ENCODE measurements at regions of chr7 and their contacts with region 1.

Region 1: GRCh38 chr7:77759294-77759889 is 38.8 kb downstream of the TMEM60 start:
- DNase-seq: peak; percentile 27 to 44
- ATAC-seq: peak; percentile 69 to 78
- H3K4me3 ChIP-seq: no peak overlapping the region
- H3K27ac ChIP-seq: peak overlapping the region; percentile 24 to 57 (median 48)
- H3K4me1 ChIP-seq: peaks cover 25 to 39% of the 10 kb centered on the region in 2 donors
- H3K27me3 ChIP-seq: no peaks in the 10 kb centered on the region
- CTCF ChIP-seq: peak; percentile 80 to 91 (median 81)
- POLR2A ChIP-seq: no peak

Region 2: GRCh38 chr7:77439572-77439971 is 319.8 kb before region 1 on chr7:
- in situ Hi-C with region 1: loop called in 2 of 4 experiments (anchors 10 kb)
- intact Hi-C with region 1: loop called (anchors 10 kb)
- DNase-seq: peak; percentile 25 to 30
- ATAC-seq: peak; percentile 68 to 73
- H3K4me3 ChIP-seq: no peak overlapping the region
- H3K27ac ChIP-seq: no peak overlapping the region
- H3K4me1 ChIP-seq: no peaks in the 10 kb centered on the region
- H3K27me3 ChIP-seq: no peaks in the 10 kb centered on the region
- CTCF ChIP-seq: peak in 3 of 5 experiments; percentile 22 to 50 (median 34)
- POLR2A ChIP-seq: no peak

Region 3: DNA sequence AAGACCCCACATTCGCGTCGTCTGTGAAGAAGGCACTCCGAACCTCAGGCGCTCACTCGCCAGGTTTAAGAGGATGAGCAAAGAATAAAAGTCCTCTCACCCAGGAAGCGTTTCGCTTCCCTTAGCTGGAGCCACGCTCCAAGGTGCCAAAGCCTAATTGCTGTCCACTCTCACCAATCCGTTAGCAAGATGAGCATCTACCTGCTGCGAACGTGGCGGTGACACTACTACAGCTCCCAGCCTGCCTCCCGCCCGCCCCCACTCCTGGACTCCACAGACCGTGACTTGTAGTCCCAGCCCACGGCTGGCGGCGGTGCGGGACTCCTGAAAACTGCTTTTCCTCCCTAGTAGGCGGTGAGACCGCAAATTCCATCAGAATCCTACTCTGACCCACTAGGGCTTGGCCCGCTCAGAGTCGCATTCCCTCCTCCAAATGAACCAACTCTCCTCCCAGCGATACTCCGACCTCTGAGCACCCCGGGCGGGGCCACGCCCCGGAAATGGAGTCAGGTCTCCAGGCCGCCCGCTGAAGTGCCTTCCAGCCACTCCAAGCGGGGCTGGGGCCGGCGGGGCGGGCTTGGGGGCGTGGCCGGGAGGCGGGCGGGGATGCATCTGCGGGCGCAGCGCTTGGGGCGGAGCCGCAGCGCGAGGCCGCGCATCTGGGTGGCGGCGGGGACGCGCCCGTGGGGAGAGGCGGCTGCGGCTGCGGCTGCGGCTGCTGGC is 222.8 kb before region 1 on chr7:
- in situ Hi-C with region 1: loop called in 1 of 4 experiments (anchors 25 kb)
- intact Hi-C with region 1: no loop called
- DNase-seq: peak; percentile 96 to 97
- ATAC-seq: peak; percentile 84 to 87
- H3K4me3 ChIP-seq: peak overlapping the region; percentile 84 to 99 (median 88)
- H3K27ac ChIP-seq: peak overlapping the region; percentile 89 to 99 (median 92)
- H3K4me1 ChIP-seq: peaks cover 16 to 23% of the 10 kb centered on the region in 2 donors
- H3K27me3 ChIP-seq: no peaks in the 10 kb centered on the region
- CTCF ChIP-seq: no peak
- POLR2A ChIP-seq: peak; percentile 89 to 96

Region 4: GRCh38 chr7:77651573-77652162 is 107.7 kb before region 1 on chr7:
- in situ Hi-C with region 1: loop called in 3 of 4 experiments (anchors 5 to 10 kb)
- intact Hi-C with region 1: loop called (anchors 2 kb)
- DNase-seq: no peak
- ATAC-seq: peak in 1 of 2 donors; percentile 39
- H3K4me3 ChIP-seq: no peak overlapping the region
- H3K27ac ChIP-seq: no peak overlapping the region
- H3K4me1 ChIP-seq: no peaks in the 10 kb centered on the region
- H3K27me3 ChIP-seq: no peaks in the 10 kb centered on the region
- CTCF ChIP-seq: peak; percentile 53 to 76 (median 65)
- POLR2A ChIP-seq: no peak

Region 5: GRCh38 chr7:77657427-77658224 is 101.8 kb before region 1 on chr7:
- in situ Hi-C with region 1: loop called (anchors 5 to 10 kb)
- intact Hi-C with region 1: loop called (anchors 2 kb)
- DNase-seq: no peak
- ATAC-seq: peak in 1 of 2 donors; percentile 74
- H3K4me3 ChIP-seq: no peak overlapping the region
- H3K27ac ChIP-seq: no peak overlapping the region
- H3K4me1 ChIP-seq: no peaks in the 10 kb centered on the region
- H3K27me3 ChIP-seq: no peaks in the 10 kb centered on the region
- CTCF ChIP-seq: peak; percentile 14 to 66 (median 40)
- POLR2A ChIP-seq: no peak

Region 6: DNA sequence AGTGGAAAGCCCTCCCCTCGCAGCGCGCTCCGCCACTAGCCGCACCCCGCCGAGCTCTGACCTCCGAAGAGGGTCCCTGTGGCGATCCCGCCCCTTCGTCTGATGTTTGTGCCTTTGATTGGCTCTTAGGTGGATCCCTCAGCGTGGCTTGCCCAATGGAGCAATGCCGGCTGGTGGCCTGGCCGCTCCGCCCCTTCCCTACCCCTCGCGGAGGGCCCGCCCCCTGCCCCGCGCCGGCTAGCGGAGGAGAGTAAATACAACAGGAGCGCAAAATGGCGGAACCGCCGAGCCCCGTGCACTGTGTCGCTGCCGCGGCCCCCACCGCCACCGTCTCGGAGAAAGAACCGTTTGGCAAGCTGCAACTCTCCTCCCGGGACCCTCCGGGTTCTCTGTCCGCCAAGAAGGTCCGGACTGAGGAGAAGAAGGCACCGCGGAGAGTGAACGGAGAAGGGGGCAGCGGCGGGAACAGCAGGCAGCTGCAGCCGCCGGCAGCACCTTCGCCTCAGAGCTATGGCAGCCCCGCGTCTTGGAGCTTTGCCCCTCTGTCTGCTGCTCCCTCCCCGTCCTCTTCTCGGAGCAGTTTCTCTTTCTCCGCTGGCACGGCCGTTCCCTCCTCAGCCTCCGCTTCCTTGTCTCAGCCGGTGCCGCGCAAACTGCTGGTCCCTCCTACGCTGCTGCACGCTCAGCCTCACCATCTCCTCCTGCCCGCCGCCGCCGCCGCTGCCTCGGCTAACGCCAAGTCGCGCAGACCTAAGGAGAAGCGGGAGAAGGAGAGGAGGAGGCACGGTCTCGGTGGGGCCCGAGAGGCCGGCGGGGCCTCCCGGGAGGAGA is 63.0 kb before region 1 on chr7 and contains the start of gene RSBN1L:
- in situ Hi-C with region 1: no loop called
- intact Hi-C with region 1: loop called (anchors 2 kb)
- DNase-seq: peak; percentile 99
- ATAC-seq: peak; percentile 92 to 96
- H3K4me3 ChIP-seq: peak within 1 kb of the TSS; percentile 90 to 100 (median 96)
- H3K27ac ChIP-seq: peak within 1 kb of the TSS; percentile 97 to 99 (median 98)
- H3K4me1 ChIP-seq: peaks cover 39 to 40% of the 10 kb centered on the region in 2 donors
- H3K27me3 ChIP-seq: no peaks in the 10 kb centered on the region
- CTCF ChIP-seq: peak; percentile 24 to 54 (median 43)
- POLR2A ChIP-seq: peak; percentile 90 to 98
- total RNA-seq, gene RSBN1L: 5.1 to 11.7 (median 8.7) TPM

Measured in gastrocnemius medialis (tissue), 4 donors.